CD4-positive, alpha-beta T cell (primary cell): ENCODE measurements at regions of chr20 and their contacts with region 1.

Region 1: GRCh38 chr20:58388882-58389323 is at the start of gene VAPB:
- DNase-seq: peak; percentile 93 to 99 (median 96)
- ATAC-seq: peak; percentile 95
- H3K4me3 ChIP-seq: peak within 1 kb of the TSS; percentile 81
- H3K4me3 Mint-ChIP-seq: peak within 1 kb of the TSS; percentile 96
- H3K27ac ChIP-seq: peak within 1 kb of the TSS; percentile 94 to 98
- H3K27ac Mint-ChIP-seq: peak within 1 kb of the TSS; percentile 92
- H3K4me1 ChIP-seq: peaks cover 31% of the 10 kb centered on the region
- H3K4me1 Mint-ChIP-seq: peaks cover 43% of the 10 kb centered on the region
- H3K27me3 ChIP-seq: peaks cover 0 to 4% of the 10 kb centered on the region in 2 experiments
- H3K27me3 Mint-ChIP-seq: no peaks in the 10 kb centered on the region
- CTCF ChIP-seq: no peak
- total RNA-seq, gene VAPB: 25.2 to 29.4 TPM

Region 2: GRCh38 chr20:57622579-57623377 is 766.1 kb before region 1 on chr20:
- CTCF ChIA-PET with region 1: no interaction called
- POLR2A ChIA-PET with region 1: interaction called, 7 read pairs
- intact Hi-C with region 1: loop called in 1 of 2 experiments (anchors 10 kb)
- DNase-seq: peak; percentile 65 to 85 (median 74)
- ATAC-seq: peak; percentile 53
- H3K4me3 ChIP-seq: no peak overlapping the region
- H3K4me3 Mint-ChIP-seq: peak overlapping the region; percentile 87
- H3K27ac ChIP-seq: no peak overlapping the region
- H3K27ac Mint-ChIP-seq: peak overlapping the region; percentile 84
- H3K4me1 ChIP-seq: peaks cover 71% of the 10 kb centered on the region
- H3K4me1 Mint-ChIP-seq: peaks cover 88% of the 10 kb centered on the region
- H3K27me3 ChIP-seq: no peaks in the 10 kb centered on the region
- H3K27me3 Mint-ChIP-seq: no peaks in the 10 kb centered on the region
- CTCF ChIP-seq: peak; percentile 73

Region 3: GRCh38 chr20:58236612-58237330 is 152.1 kb before region 1 on chr20:
- CTCF ChIA-PET with region 1: interaction called, 4 read pairs
- POLR2A ChIA-PET with region 1: interaction called, 4 read pairs
- intact Hi-C with region 1: loop called (anchors 1 to 5 kb)
- DNase-seq: peak; percentile 66 to 90 (median 82)
- ATAC-seq: peak; percentile 87
- H3K4me3 ChIP-seq: peak overlapping the region; percentile 71
- H3K4me3 Mint-ChIP-seq: peak overlapping the region; percentile 88
- H3K27ac ChIP-seq: peak overlapping the region; percentile 58 to 66
- H3K27ac Mint-ChIP-seq: peak overlapping the region; percentile 77
- H3K4me1 ChIP-seq: peaks cover 9% of the 10 kb centered on the region
- H3K4me1 Mint-ChIP-seq: peaks cover 13% of the 10 kb centered on the region
- H3K27me3 ChIP-seq: no peaks in the 10 kb centered on the region
- H3K27me3 Mint-ChIP-seq: no peaks in the 10 kb centered on the region
- CTCF ChIP-seq: peak; percentile 99

Region 4: GRCh38 chr20:58286729-58287128 is 102.2 kb before region 1 on chr20:
- CTCF ChIA-PET with region 1: no interaction called
- POLR2A ChIA-PET with region 1: no interaction called
- intact Hi-C with region 1: no loop called
- DNase-seq: peak in 1 of 14 experiments; percentile 10
- ATAC-seq: no peak
- H3K4me3 ChIP-seq: no peak overlapping the region
- H3K4me3 Mint-ChIP-seq: no peak overlapping the region
- H3K27ac ChIP-seq: no peak overlapping the region
- H3K27ac Mint-ChIP-seq: peak overlapping the region; percentile 58
- H3K4me1 ChIP-seq: peaks cover 6% of the 10 kb centered on the region
- H3K4me1 Mint-ChIP-seq: peaks cover 34% of the 10 kb centered on the region
- H3K27me3 ChIP-seq: no peaks in the 10 kb centered on the region
- H3K27me3 Mint-ChIP-seq: no peaks in the 10 kb centered on the region
- CTCF ChIP-seq: no peak

Region 5: GRCh38 chr20:58407966-58408557 is 19.2 kb after region 1 on chr20:
- CTCF ChIA-PET with region 1: interaction called, 4 read pairs
- POLR2A ChIA-PET with region 1: interaction called, 20 read pairs
- intact Hi-C with region 1: loop called in 1 of 2 experiments (anchors 2 kb)
- DNase-seq: peak in 5 of 14 experiments; percentile 22 to 46 (median 40)
- ATAC-seq: peak; percentile 77
- H3K4me3 ChIP-seq: no peak overlapping the region
- H3K4me3 Mint-ChIP-seq: peak overlapping the region; percentile 79
- H3K27ac ChIP-seq: peak overlapping the region; percentile 32 to 65
- H3K27ac Mint-ChIP-seq: peak overlapping the region; percentile 88
- H3K4me1 ChIP-seq: peaks cover 18% of the 10 kb centered on the region
- H3K4me1 Mint-ChIP-seq: peaks cover 38% of the 10 kb centered on the region
- H3K27me3 ChIP-seq: no peaks in the 10 kb centered on the region
- H3K27me3 Mint-ChIP-seq: no peaks in the 10 kb centered on the region
- CTCF ChIP-seq: no peak

Region 6: GRCh38 chr20:58692594-58693226 is 303.8 kb after region 1 on chr20 and contains the start of gene NPEPL1:
- CTCF ChIA-PET with region 1: no interaction called
- POLR2A ChIA-PET with region 1: interaction called, 3 read pairs
- intact Hi-C with region 1: loop called in 1 of 2 experiments (anchors 2 kb)
- DNase-seq: peak in 12 of 14 experiments; percentile 22 to 87 (median 64)
- ATAC-seq: peak; percentile 95
- H3K4me3 ChIP-seq: peak within 1 kb of the TSS; percentile 50
- H3K4me3 Mint-ChIP-seq: peak within 1 kb of the TSS; percentile 83
- H3K27ac ChIP-seq: peak within 1 kb of the TSS; percentile 10 to 65
- H3K27ac Mint-ChIP-seq: peak within 1 kb of the TSS; percentile 81
- H3K4me1 ChIP-seq: peaks cover 23% of the 10 kb centered on the region
- H3K4me1 Mint-ChIP-seq: peaks cover 11% of the 10 kb centered on the region
- H3K27me3 ChIP-seq: no peaks in the 10 kb centered on the region
- H3K27me3 Mint-ChIP-seq: no peaks in the 10 kb centered on the region
- CTCF ChIP-seq: no peak
- total RNA-seq, gene NPEPL1: 58.3 to 61.1 TPM

Region 7: DNA sequence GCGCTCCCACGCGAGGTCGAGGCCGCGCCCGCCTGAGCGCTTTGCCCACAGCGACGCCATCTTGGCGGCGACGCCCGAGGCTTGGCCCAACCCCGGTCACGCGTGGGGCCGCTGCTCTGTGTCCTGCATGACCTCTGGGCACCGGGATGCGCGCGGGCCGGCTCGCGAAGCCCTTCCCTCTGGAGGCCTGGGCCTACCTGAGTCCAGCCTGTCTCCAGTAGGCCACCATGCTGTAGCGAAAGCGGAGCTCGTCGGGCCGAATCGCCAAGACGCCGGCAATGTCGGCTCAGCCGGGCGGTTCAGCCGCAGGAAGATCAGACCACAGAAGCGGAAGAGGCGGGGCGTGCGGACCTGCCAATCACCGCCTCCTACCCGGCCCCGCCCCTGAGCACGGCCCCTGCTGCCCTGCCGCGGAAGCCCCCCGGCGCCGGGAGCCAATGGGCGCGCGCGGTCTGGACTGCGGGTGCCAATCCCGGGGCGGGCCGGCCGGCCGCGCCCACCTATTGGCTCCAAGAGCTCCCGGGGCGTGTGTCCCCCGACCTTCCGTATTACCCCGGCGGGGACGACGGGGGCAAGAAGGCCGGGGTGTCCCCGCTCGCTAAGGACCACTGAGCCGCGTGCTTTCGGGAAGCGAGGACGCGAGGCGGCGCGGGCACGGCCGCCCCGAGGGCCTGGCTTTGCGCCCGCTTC is 643.3 kb after region 1 on chr20 and contains the start of gene ATP5F1E:
- CTCF ChIA-PET with region 1: no interaction called
- POLR2A ChIA-PET with region 1: no interaction called
- intact Hi-C with region 1: loop called in 1 of 2 experiments (anchors 5 kb)
- DNase-seq: peak; percentile 94 to 99 (median 96)
- ATAC-seq: peak; percentile 95
- H3K4me3 ChIP-seq: peak within 1 kb of the TSS; percentile 76
- H3K4me3 Mint-ChIP-seq: peak within 1 kb of the TSS; percentile 97
- H3K27ac ChIP-seq: peak within 1 kb of the TSS; percentile 81 to 86
- H3K27ac Mint-ChIP-seq: peak within 1 kb of the TSS; percentile 87
- H3K4me1 ChIP-seq: peaks cover 31% of the 10 kb centered on the region
- H3K4me1 Mint-ChIP-seq: peaks cover 61% of the 10 kb centered on the region
- H3K27me3 ChIP-seq: no peaks in the 10 kb centered on the region
- H3K27me3 Mint-ChIP-seq: no peaks in the 10 kb centered on the region
- CTCF ChIP-seq: no peak
- total RNA-seq, gene ATP5F1E: 51.1 to 53.1 TPM